Activated CD4-positive, alpha-beta T cell treated with anti-CD3 and anti-CD28 coated beads for 36 hours (primary cell): ENCODE measurements at regions of chr2 and their contacts with region 1.

Region 1: DNA sequence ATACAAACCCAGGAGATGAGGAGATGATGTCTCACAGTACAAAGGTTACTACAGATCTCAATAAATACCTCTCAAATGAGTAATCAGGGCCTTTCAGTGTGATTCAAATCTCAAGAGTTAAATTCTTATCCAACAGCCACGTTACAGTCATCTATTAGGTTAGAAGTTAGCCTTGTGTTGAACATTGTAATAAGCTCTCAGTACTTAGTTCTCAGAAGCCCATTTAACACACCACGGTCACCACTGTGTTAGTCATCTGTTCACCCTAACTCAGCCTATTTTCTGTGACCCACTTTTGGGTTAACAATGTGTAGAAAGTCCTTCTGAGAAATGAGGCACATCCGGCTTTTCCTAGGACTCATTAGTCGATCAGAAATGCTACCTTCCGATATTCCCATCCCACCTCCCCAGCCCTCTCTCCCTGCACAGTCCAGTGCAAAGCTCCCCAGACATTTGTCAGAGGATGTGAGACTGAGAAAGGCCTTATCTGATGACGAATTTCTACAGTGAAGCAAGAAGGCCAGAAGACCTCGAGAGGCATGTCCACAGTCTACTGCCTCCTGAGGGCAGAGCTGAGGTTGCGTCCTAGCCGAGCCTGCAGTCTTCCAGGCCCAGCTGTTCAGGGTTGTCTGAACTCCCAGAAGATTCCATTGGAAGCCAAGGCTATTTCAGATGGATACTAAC is 92.6 kb downstream of the ACTR2 start:
- DNase-seq: peak; percentile 45
- ATAC-seq: peak; percentile 94
- H3K4me3 Mint-ChIP-seq: peak overlapping the region; percentile 21
- H3K27ac Mint-ChIP-seq: peak overlapping the region; percentile 74
- H3K4me1 Mint-ChIP-seq: peaks cover 21% of the 10 kb centered on the region
- H3K27me3 Mint-ChIP-seq: no peaks in the 10 kb centered on the region

Region 2: GRCh38 chr2:64982311-64982857 is 337.8 kb before region 1 on chr2:
- CTCF ChIA-PET with region 1: no interaction called
- POLR2A ChIA-PET with region 1: no interaction called
- intact Hi-C with region 1: loop called in 1 of 2 experiments (anchors 1 kb)
- DNase-seq: peak; percentile 31
- ATAC-seq: peak; percentile 81
- H3K4me3 Mint-ChIP-seq: no peak overlapping the region
- H3K27ac Mint-ChIP-seq: peak overlapping the region; percentile 52
- H3K4me1 Mint-ChIP-seq: peaks cover 30% of the 10 kb centered on the region
- H3K27me3 Mint-ChIP-seq: no peaks in the 10 kb centered on the region

Region 3: DNA sequence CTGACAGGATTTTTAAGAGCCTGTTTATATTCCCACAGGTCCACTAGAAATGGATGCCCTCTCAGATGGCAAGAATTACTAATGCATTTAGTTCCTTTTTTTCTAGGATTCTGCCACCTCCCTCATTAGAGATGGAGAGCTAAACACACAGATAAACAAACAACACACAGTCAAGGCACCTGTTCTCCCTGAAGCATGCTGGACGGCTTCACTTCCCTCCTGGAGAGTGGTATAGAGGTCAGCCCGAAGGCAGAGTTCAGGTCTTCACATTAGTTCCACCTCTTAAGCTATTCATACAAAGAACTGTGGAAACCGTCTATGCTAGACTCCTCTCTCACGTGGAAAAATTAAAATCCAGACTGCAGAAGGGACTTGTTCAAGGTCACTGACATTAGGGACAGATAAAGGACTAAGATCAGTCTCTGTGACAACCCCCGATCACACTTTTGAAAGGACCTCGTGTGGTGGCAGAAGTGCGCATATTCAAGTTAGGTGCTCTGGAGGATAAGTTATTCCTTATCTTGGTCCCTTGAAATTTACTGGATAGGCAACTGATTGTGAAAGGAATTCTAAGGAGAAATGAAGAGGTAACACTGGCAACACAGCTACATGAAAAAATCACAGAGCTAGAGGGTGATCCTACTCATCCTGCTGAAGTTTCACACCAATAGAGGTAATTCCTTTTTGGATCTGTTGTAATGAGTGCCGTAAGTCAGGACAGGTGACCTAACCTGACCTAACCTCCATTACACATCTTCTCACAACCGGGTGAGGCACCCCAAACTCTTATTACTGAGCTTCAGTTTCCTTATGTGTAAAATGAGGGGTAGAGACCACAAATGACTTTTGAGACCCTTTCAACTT is 37.1 kb after region 1 on chr2:
- CTCF ChIA-PET with region 1: interaction called, 5 read pairs
- POLR2A ChIA-PET with region 1: no interaction called
- intact Hi-C with region 1: loop called (anchors 1 to 5 kb)
- DNase-seq: peak; percentile 38
- ATAC-seq: peak; percentile 77
- H3K4me3 Mint-ChIP-seq: no peak overlapping the region
- H3K27ac Mint-ChIP-seq: no peak overlapping the region
- H3K4me1 Mint-ChIP-seq: peaks cover 26% of the 10 kb centered on the region
- H3K27me3 Mint-ChIP-seq: peaks cover 5% of the 10 kb centered on the region

Region 4: GRCh38 chr2:65382776-65383357 is 62.7 kb after region 1 on chr2:
- CTCF ChIA-PET with region 1: no interaction called
- POLR2A ChIA-PET with region 1: no interaction called
- intact Hi-C with region 1: loop called in 1 of 2 experiments (anchors 2 kb)
- DNase-seq: peak; percentile 95
- ATAC-seq: peak; percentile 90
- H3K4me3 Mint-ChIP-seq: peak overlapping the region; percentile 26
- H3K27ac Mint-ChIP-seq: peak overlapping the region; percentile 33
- H3K4me1 Mint-ChIP-seq: peaks cover 32% of the 10 kb centered on the region
- H3K27me3 Mint-ChIP-seq: peaks cover 13% of the 10 kb centered on the region

Region 5: GRCh38 chr2:65605743-65606058 is 285.5 kb after region 1 on chr2:
- CTCF ChIA-PET with region 1: no interaction called
- POLR2A ChIA-PET with region 1: no interaction called
- intact Hi-C with region 1: loop called in 1 of 2 experiments (anchors 1 kb)
- DNase-seq: no peak
- ATAC-seq: no peak
- H3K4me3 Mint-ChIP-seq: no peak overlapping the region
- H3K27ac Mint-ChIP-seq: peak overlapping the region; percentile 34
- H3K4me1 Mint-ChIP-seq: peaks cover 19% of the 10 kb centered on the region
- H3K27me3 Mint-ChIP-seq: no peaks in the 10 kb centered on the region